IMR-90 (cell line): ENCODE measurements at regions of chr1 and their contacts with region 1.

Region 1: GRCh38 chr1:206912445-206913095 is 9.2 kb downstream of the FCMR start:
- DNase-seq: peak; percentile 75
- ATAC-seq: peak; percentile 80
- H3K4me3 ChIP-seq: no peak overlapping the region
- H3K27ac ChIP-seq: no peak overlapping the region
- H3K4me1 ChIP-seq: peaks cover 3% of the 10 kb centered on the region
- H3K27me3 ChIP-seq: peaks cover 37% of the 10 kb centered on the region
- CTCF ChIP-seq: peak; percentile 89
- POLR2A ChIP-seq: 0 out of 2 replicates have a peak, but pooled peaks have one; percentile 24
- RAD21 ChIP-seq: peak; percentile 90

Region 2: DNA sequence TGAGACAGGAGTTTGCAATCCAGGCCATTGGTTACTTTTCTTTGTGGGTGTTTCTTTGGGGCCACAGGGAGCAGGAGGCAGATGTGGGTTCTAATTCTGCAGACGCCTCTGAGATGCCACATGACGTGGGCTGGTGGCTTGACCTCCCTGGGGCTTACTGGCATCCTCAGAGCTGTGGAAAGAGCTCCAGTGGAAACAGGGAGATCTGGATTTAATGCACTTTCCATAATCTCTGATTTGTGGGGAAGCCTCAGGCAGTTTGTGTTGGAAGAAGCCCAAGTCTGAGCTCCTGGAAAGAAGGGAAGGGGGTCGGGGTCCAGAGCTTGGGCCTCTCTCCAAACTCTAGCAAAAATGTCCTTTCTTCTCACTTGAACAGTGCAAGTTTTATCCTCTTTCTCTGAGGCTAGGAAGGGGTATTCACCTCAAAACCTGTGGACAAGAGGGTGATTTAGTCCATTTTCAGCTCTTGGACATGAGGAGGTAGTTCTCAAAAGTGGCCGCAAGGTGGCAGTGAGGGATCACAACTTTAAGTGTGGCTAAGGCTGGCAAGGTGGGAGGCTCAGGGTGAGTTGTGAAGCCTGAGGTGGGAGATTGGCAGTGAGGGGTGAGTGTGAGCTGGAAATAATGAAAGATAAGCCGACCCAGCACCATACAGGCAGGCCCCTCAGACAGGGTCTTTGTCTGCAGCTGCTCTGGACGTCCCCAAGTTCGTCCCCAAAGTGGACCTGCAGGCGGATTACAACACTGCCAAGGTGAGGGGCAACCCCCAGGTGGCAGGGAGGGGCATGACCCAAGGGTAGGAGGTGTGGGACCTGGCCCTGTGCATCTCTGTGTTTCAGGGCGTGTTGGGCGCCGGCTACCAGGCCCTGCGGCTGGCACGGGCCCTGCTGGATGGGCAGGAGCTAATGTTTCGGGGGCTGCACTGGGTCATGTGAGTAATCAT is 433.1 kb before region 1 on chr1:
- CTCF ChIA-PET with region 1: no interaction called
- POLR2A ChIA-PET with region 1: no interaction called
- dilution Hi-C with region 1: no loop called
- in situ Hi-C with region 1: loop called (anchors 10 kb)
- intact Hi-C with region 1: loop called (anchors 1 kb)
- DNase-seq: peak; percentile 82
- ATAC-seq: peak; percentile 86
- H3K4me3 ChIP-seq: no peak overlapping the region
- H3K27ac ChIP-seq: no peak overlapping the region
- H3K4me1 ChIP-seq: peaks cover 9% of the 10 kb centered on the region
- H3K27me3 ChIP-seq: no peaks in the 10 kb centered on the region
- CTCF ChIP-seq: peak; percentile 79
- POLR2A ChIP-seq: no peak
- RAD21 ChIP-seq: peak; percentile 76

Region 3: GRCh38 chr1:206612129-206612876 is 300.3 kb before region 1 on chr1 and contains the start of gene EIF2D:
- CTCF ChIA-PET with region 1: no interaction called
- POLR2A ChIA-PET with region 1: no interaction called
- dilution Hi-C with region 1: no loop called
- in situ Hi-C with region 1: loop called (anchors 10 kb)
- intact Hi-C with region 1: loop called (anchors 1 kb)
- DNase-seq: peak; percentile 87
- ATAC-seq: peak; percentile 100
- H3K4me3 ChIP-seq: peak within 1 kb of the TSS; percentile 71
- H3K27ac ChIP-seq: peak within 1 kb of the TSS; percentile 96
- H3K4me1 ChIP-seq: peaks cover 4% of the 10 kb centered on the region
- H3K27me3 ChIP-seq: peaks cover 4% of the 10 kb centered on the region; the same call in 1 of the 2 replicates
- CTCF ChIP-seq: peak; percentile 99
- POLR2A ChIP-seq: peak; percentile 97
- RAD21 ChIP-seq: peak; percentile 61
- total RNA-seq, gene EIF2D: 51.7 and 69.4 TPM in 2 replicates

Region 4: DNA sequence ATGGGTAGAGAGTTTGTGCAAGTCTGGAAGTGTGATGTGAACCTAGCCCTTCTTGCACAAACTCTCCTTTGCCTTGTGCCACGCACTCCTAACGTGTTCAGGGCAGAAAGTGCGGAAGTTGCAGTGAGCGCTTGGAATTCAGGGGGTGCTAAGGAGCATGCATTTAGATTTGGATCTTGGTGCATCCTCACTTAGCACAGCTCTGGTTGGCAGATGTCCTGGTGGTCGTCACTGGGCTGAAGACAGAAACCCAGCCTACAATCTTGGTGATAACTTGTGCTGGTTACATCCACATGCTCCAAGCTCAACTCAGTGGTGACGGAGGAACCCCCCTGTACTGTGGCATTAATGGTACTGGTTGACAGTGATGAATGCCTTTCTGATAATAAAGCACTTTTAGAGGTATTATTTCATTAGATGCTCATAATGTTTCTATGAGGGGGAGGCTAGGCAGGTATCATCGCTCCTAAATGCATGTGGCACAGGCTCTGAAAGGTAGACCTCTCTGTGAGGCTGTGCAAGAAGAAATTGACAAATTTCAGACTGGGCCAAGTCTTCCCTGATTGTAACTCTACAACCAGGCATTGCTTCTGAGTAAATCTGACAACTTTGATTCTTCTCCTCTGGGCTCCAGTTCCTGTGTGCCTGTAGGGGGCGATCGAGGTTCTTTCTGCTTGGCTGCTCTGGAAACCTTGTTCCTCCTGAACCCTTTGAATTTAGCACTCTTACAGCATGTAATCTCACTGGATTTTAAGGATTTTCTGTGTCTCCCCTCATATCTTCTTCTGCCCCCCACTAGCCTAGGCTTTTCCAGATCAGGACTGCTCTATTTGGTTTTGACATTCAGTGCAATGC is 187.2 kb before region 1 on chr1:
- CTCF ChIA-PET with region 1: interaction called, 3 read pairs
- POLR2A ChIA-PET with region 1: no interaction called
- dilution Hi-C with region 1: no loop called
- in situ Hi-C with region 1: no loop called
- intact Hi-C with region 1: loop called (anchors 2 kb)
- DNase-seq: peak; percentile 51
- ATAC-seq: peak; percentile 48
- H3K4me3 ChIP-seq: no peak overlapping the region
- H3K27ac ChIP-seq: no peak overlapping the region
- H3K4me1 ChIP-seq: peaks cover 22% of the 10 kb centered on the region
- H3K27me3 ChIP-seq: no peaks in the 10 kb centered on the region
- CTCF ChIP-seq: peak; percentile 62
- POLR2A ChIP-seq: no peak
- RAD21 ChIP-seq: peak; percentile 47

Region 5: DNA sequence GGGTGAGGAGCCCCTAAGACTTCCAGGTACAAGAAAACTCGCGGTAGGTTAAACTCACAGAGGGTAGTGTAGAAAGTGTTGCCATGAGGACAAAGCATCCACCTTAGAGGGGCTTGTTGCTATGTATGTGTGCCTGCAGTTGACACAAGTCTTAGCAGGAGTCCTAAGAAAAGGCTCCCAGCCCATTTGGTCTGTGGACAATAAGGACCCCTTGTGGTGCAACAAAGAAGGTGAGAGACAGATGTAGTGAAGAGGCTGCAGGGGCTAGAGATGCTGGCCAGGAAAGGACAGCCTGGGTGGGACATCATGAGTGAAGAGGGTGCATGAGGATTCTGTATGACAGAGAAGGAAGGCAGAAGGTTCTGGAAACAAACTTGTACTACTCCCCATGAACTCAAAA is 104.0 kb before region 1 on chr1:
- CTCF ChIA-PET with region 1: interaction called, 39 read pairs
- POLR2A ChIA-PET with region 1: no interaction called
- dilution Hi-C with region 1: no loop called
- in situ Hi-C with region 1: loop called (anchors 5 kb)
- intact Hi-C with region 1: loop called (anchors 1 kb)
- DNase-seq: peak; percentile 57
- ATAC-seq: peak; percentile 54; the same call in 1 of the 2 replicates
- H3K4me3 ChIP-seq: no peak overlapping the region
- H3K27ac ChIP-seq: no peak overlapping the region
- H3K4me1 ChIP-seq: no peaks in the 10 kb centered on the region
- H3K27me3 ChIP-seq: peaks cover 5% of the 10 kb centered on the region; the same call in 1 of the 2 replicates
- CTCF ChIP-seq: peak; percentile 62
- POLR2A ChIP-seq: no peak
- RAD21 ChIP-seq: peak; percentile 82

Region 6: GRCh38 chr1:206967096-206967849 is 54.7 kb after region 1 on chr1:
- CTCF ChIA-PET with region 1: no interaction called
- POLR2A ChIA-PET with region 1: no interaction called
- dilution Hi-C with region 1: no loop called
- in situ Hi-C with region 1: no loop called
- intact Hi-C with region 1: no loop called
- DNase-seq: peak; percentile 29
- ATAC-seq: no peak
- H3K4me3 ChIP-seq: no peak overlapping the region
- H3K27ac ChIP-seq: no peak overlapping the region
- H3K4me1 ChIP-seq: no peaks in the 10 kb centered on the region
- H3K27me3 ChIP-seq: peaks cover 33% of the 10 kb centered on the region
- CTCF ChIP-seq: no peak
- POLR2A ChIP-seq: no peak
- RAD21 ChIP-seq: no peak

Region 7: DNA sequence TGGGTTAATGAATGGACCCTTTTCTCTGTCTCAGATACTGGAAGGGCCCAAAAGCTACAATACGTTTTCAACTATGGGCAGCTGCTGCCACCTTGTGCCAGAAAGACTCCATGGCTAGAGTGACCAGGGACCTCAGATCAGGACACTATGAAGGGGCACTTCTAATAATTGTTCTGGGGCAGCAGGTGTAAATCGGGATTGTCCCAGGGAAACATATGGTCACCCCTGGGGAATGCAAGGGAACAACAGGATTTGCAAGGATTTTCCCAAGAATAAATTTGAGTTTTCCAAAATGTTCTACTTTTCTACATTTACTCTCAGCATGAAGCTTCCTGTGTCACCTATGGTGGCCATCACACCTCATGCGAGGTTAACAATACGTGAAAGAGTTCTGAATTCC is 69.6 kb after region 1 on chr1:
- CTCF ChIA-PET with region 1: interaction called, 13 read pairs
- POLR2A ChIA-PET with region 1: no interaction called
- dilution Hi-C with region 1: no loop called
- in situ Hi-C with region 1: no loop called
- intact Hi-C with region 1: no loop called
- DNase-seq: peak; percentile 22
- ATAC-seq: peak; percentile 82
- H3K4me3 ChIP-seq: no peak overlapping the region
- H3K27ac ChIP-seq: no peak overlapping the region
- H3K4me1 ChIP-seq: no peaks in the 10 kb centered on the region
- H3K27me3 ChIP-seq: peaks cover 37% of the 10 kb centered on the region
- CTCF ChIP-seq: peak; percentile 65
- POLR2A ChIP-seq: no peak
- RAD21 ChIP-seq: peak; percentile 72

Region 8: DNA sequence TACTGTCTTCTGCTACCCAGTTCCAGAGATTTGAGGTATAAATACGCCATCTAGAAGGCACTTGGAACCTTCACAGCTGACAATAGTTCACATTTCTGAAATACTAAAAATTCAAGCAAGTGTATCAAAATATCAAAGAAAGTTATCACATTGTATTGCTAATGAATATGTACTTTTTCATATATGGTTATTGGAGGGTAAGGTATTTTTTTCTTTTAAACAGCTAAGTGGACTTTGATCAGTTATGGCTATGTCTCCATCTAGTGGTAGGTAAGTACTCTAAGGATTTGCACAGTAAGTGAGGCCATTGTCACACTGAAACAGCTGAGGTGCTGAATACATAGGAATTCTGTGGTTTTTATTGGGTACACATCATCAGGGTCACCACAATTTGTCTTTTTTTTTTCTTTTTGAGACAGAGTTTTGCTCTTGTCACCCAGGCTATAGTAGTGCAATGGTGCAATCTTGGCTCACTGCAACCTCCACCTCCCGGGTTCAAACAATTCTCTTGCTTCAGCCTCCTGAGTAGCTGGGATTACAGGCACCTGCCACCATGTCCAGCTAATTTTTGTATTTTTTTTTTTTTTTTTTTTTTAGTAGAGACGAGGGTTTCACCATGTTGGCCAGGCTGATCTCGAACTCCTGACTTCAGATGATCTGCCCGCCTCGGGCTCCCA is 492.4 kb after region 1 on chr1:
- CTCF ChIA-PET with region 1: no interaction called
- POLR2A ChIA-PET with region 1: no interaction called
- dilution Hi-C with region 1: no loop called
- in situ Hi-C with region 1: no loop called
- intact Hi-C with region 1: loop called (anchors 10 kb)
- DNase-seq: peak; percentile 78
- ATAC-seq: peak; percentile 94
- H3K4me3 ChIP-seq: no peak overlapping the region
- H3K27ac ChIP-seq: no peak overlapping the region
- H3K4me1 ChIP-seq: no peaks in the 10 kb centered on the region
- H3K27me3 ChIP-seq: peaks cover 4% of the 10 kb centered on the region
- CTCF ChIP-seq: peak; percentile 86
- POLR2A ChIP-seq: peak; percentile 36; the same call in 1 of the 2 replicates
- RAD21 ChIP-seq: peak; percentile 86

Region 9: DNA sequence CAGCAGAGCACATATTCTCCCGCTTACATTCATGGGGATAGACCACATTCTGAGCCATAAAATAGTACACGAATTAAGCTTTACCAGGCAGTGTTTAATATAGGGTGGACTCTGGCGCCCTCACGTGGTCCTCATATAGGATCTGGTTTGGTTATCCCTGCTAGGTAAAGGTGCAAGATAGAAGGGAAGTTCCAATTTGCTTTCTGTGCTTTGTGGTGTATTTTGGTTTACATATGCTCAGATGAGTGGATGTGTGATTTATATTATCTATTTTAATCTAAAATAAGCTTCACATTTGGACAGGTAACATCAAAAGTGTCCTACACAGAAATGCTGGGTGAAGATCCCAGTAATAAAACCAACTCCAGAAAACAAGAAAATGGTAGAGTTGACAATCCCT is 587.0 kb after region 1 on chr1:
- CTCF ChIA-PET with region 1: no interaction called
- POLR2A ChIA-PET with region 1: no interaction called
- dilution Hi-C with region 1: no loop called
- in situ Hi-C with region 1: no loop called
- intact Hi-C with region 1: no loop called
- DNase-seq: peak; percentile 59
- ATAC-seq: peak; percentile 93
- H3K4me3 ChIP-seq: no peak overlapping the region
- H3K27ac ChIP-seq: no peak overlapping the region
- H3K4me1 ChIP-seq: no peaks in the 10 kb centered on the region
- H3K27me3 ChIP-seq: peaks cover 24% of the 10 kb centered on the region
- CTCF ChIP-seq: peak; percentile 74
- POLR2A ChIP-seq: no peak
- RAD21 ChIP-seq: peak; percentile 81